Ovary (tissue), 10 donors: ENCODE measurements at regions of chr6 and their contacts with region 1.

Region 1: DNA sequence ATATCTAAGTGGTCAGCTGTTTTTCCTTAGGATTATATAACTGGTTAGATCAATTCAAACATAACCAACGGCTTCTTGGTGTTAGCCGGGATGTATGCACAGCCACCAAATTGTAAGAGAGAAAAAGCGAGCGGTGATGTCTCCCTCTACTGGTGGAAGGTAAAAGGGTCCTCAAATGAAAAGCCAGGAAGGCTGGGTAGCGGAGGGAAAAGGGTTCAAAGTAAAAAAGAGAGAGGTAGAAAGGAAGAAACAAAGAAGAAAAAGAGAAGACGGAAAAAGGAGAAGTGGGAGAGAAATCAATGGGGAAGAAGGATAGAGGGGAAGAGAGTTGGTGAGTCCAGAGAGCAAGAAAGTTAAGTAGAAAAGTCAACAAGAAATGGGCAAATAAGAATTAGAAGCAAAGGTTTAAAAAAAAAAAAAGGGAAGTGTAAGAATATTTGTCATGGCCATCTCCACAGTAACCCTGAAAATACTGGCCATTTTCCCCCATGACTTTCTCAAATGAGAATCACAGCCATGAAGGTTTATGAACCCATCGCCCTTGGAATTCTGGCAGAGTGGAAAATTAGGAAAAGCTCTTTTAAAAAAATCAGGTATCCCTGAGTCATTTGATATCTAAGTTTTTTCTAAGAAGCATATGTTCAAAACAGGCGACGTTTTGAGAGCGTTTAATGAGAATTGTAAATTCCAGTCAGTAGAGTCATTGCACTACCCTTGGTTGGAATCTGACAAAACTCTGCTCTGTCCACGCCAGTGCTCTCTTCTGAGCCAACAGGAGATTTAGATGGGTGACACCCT is 155.6 kb upstream of the SNX9 start:
- DNase-seq: peak in 2 of 5 donors; percentile 49 to 65
- H3K4me3 ChIP-seq: no peak overlapping the region
- H3K27ac ChIP-seq: no peak overlapping the region
- H3K4me1 ChIP-seq: peaks cover 9% of the 10 kb centered on the region
- H3K27me3 ChIP-seq: no peaks in the 10 kb centered on the region
- CTCF ChIP-seq: peak; percentile 58 to 66 (median 64)
- EP300 ChIP-seq: no peak
- POLR2A ChIP-seq: no peak

Region 2: GRCh38 chr6:157323255-157323965 is 344.0 kb before region 1 on chr6 and contains the start of gene TMEM242:
- intact Hi-C with region 1: loop called in 2 of 4 experiments (anchors 5 to 10 kb)
- DNase-seq: peak; percentile 85 to 95 (median 89)
- H3K4me3 ChIP-seq: peak within 1 kb of the TSS; percentile 59
- H3K27ac ChIP-seq: peak within 1 kb of the TSS; percentile 69 to 91
- H3K4me1 ChIP-seq: no peaks in the 10 kb centered on the region
- H3K27me3 ChIP-seq: no peaks in the 10 kb centered on the region
- CTCF ChIP-seq: peak in 2 of 3 donors; percentile 46 to 47
- EP300 ChIP-seq: no peak
- POLR2A ChIP-seq: peak; percentile 69
- total RNA-seq, gene TMEM242: 5.5 to 12.1 (median 10.1) TPM

Region 3: DNA sequence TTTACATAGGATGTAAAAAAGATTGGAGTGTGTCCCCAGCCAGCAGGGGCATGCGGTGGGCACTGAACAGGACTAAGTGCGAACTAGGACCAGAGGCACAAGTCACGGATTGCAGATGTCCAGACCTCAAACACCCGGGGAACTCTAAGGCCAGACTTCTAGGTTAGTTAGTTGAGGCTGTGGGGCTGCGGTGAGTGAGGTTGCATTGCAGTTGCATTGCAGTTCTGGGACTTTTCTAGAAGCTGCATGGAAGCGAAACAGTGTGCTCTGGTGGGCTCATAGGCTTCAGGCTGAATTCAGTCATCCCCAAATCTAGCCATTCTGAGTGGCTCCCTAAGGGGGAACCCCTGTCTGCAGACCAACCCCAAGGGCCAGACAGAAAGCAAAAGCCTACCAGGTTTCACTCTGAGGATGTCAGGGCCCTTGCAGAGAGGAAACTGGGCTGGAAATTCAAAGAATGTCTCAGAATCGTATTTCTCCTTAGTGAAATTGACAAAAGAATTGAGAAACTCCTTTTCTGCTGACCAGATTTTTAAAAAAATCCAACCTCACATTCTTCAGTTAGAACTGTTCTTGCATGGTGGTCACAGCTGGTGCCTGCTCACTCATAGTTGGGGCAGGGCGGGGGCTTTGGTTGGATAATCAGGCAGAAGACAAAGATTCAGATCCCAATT is 103.7 kb before region 1 on chr6:
- intact Hi-C with region 1: no loop called
- DNase-seq: no peak
- H3K4me3 ChIP-seq: no peak overlapping the region
- H3K27ac ChIP-seq: no peak overlapping the region
- H3K4me1 ChIP-seq: no peaks in the 10 kb centered on the region
- H3K27me3 ChIP-seq: no peaks in the 10 kb centered on the region
- CTCF ChIP-seq: no peak
- EP300 ChIP-seq: no peak
- POLR2A ChIP-seq: no peak